PC-9 (cell line): ENCODE measurements at regions of chr10 and their contacts with region 1.

Region 1: DNA sequence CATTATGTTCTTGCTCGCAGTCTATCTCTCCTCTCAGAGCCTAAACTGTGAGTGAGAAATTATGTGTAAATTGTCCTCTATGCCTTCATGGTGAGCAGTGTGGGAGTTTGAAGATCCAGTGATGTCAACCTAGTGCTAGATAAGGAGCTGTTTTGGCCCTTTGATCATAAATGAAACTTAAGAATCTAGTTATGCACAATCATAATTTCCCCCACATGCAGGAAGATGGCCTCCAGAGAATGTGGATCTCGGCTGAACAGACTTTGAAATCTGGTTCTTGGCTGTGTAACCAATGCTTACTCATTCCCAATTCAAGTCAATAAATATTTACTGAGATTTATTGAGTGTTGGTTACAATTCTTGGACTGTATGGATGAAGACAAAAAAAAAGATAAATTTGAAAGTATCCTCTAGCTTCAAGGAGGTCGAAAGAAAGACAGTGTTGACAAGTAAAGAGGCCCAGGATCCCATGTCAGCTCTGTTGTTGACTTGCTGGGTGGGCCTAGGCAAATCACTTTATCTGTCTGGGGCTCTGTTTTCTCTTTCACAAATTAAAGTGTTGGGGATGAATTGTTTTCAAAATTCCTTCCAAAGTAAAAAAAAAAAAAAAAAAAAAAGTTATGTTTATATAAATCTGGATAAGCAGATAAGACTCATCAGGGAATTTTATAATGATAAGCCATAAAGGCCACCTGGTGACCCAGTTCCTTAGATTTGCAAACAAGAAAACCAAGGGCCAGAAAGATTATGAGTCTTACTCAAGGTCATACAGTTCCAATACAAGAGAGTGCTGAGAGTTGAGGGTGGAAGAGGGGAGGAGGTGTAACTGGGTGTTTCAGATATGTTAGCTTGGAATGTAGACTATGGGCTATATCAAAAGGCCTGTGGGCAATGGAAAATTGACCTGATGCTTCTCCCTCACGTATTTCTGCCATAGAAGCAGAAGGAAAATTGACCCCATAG is 969.9 kb downstream of the KCNMA1 start:
- DNase-seq: no peak
- H3K4me3 ChIP-seq: no peak overlapping the region
- H3K27ac ChIP-seq: no peak overlapping the region
- H3K4me1 ChIP-seq: no peaks in the 10 kb centered on the region
- H3K27me3 ChIP-seq: no peaks in the 10 kb centered on the region
- CTCF ChIP-seq: no peak

Region 2: DNA sequence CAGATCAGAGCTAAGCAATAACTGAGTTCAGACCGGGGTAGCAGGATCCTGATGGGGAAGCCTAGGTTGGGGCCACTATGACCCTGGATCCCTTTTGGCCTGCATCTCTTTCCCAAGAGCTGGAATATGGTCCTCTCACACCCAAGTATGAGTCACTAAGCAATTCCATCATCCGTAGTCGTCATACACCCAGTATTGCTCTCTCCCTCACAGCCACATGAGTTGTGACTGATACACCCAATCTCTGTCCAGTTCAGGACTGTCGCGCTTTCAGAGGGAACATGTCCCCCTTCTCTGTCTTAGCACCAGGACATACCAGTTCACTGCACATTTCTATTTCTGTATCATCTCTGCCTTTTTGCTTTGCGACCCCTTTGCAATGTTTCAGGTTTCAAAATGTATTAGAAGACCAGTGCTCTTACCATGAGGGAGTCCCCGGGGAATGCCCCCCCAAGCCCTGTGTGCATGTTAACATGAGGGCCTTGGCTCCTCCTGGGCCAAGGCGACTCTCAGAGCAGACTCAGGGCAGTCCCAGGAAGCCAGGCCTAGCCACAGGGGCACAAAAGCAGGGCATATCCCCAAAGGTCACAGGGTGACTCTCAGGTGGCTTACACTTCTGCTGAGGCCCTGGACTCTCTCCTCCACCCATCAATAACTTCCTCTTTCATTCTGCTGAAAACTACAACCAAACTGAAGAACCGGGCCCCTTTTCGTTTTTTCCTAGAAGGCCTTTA is 1631.5 kb before region 1 on chr10:
- CTCF ChIA-PET with region 1: no interaction called
- POLR2A ChIA-PET with region 1: interaction called, 13 read pairs
- intact Hi-C with region 1: no loop called
- DNase-seq: no peak
- H3K4me3 ChIP-seq: no peak overlapping the region
- H3K27ac ChIP-seq: no peak overlapping the region
- H3K4me1 ChIP-seq: no peaks in the 10 kb centered on the region
- H3K27me3 ChIP-seq: no peaks in the 10 kb centered on the region
- CTCF ChIP-seq: no peak

Region 3: GRCh38 chr10:76618171-76618570 is 49.5 kb before region 1 on chr10:
- CTCF ChIA-PET with region 1: no interaction called
- POLR2A ChIA-PET with region 1: no interaction called
- intact Hi-C with region 1: no loop called
- DNase-seq: no peak
- H3K4me3 ChIP-seq: no peak overlapping the region
- H3K27ac ChIP-seq: no peak overlapping the region
- H3K4me1 ChIP-seq: no peaks in the 10 kb centered on the region
- H3K27me3 ChIP-seq: no peaks in the 10 kb centered on the region
- CTCF ChIP-seq: no peak